GM13976 (cell line): ENCODE measurements at regions of chr15 and their contacts with region 1.

Region 1: GRCh38 chr15:45118131-45118588 is 4.0 kb downstream of the DUOXA2 start:
- DNase-seq: peak; percentile 93
- CTCF ChIP-seq: peak; percentile 99

Region 2: DNA sequence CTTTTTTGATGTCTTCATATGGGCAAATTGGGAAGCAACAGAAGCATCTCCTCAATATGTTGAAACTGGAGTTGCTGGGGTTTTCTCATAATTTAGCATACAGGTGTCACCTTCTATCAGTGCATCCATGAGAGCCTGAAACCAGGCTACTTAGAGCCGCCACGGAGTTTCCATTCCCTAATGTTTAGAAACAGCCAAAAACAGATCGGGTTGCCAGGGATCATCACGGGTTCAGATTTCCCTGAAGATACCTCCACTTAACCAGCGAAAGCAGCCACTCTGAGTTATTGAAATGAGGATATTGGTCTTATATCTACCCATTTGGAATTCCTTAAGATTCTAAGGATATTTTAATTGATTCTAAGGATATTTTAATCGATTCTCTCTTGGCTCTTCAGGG is 147.1 kb before region 1 on chr15:
- in situ Hi-C with region 1: loop called (anchors 25 kb)
- DNase-seq: no peak
- CTCF ChIP-seq: no peak